ENCODE measurements at regions of chr2 and their contacts with region 1.

Region 1: GRCh38 chr2:69306822-69307578 is 80.0 kb downstream of the GFPT1 start:
- DNase-seq: peak; percentile 76 to 82
- H3K4me3 ChIP-seq: peak overlapping the region; percentile 35 to 71 (median 57)
- H3K27ac ChIP-seq: peak overlapping the region; percentile 42 to 55 (median 46)
- H3K4me1 ChIP-seq: peaks cover 15 to 38% of the 10 kb centered on the region in 2 donors
- H3K27me3 ChIP-seq: no peaks in the 10 kb centered on the region
- CTCF ChIP-seq: peak; percentile 38 to 91 (median 76)
- POLR2A ChIP-seq: no peak

Region 2: GRCh38 chr2:69012310-69013141 is 294.5 kb before region 1 on chr2:
- intact Hi-C with region 1: loop called (anchors 5 kb)
- DNase-seq: peak; percentile 65 to 75
- H3K4me3 ChIP-seq: peak overlapping the region; percentile 59 to 90 (median 82)
- H3K27ac ChIP-seq: peak overlapping the region in 2 of 3 donors; percentile 43 to 75
- H3K4me1 ChIP-seq: peaks cover 17 to 23% of the 10 kb centered on the region in 2 donors
- H3K27me3 ChIP-seq: no peaks in the 10 kb centered on the region
- CTCF ChIP-seq: peak; percentile 41 to 81 (median 68)
- POLR2A ChIP-seq: no peak

Region 3: DNA sequence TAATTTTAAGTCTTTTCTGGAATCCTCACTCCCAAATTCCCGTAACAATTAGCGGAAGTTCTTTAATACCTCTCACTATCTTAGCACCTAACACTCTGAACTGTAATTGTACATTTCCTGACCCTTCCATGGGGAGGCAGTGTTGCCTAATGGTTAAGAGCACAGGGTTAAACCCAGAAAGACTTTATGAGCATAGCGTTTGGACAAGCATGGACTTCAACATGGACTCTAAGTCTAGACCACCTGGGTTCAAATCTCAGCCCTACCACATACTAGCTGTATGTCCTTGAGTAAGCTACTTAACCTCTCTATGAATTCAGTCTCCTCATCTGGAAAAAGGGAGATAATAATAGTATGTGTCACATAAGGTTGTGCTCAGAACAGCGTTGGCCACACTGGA is 281.0 kb before region 1 on chr2:
- intact Hi-C with region 1: loop called (anchors 5 kb)
- DNase-seq: peak; percentile 32 to 43
- H3K4me3 ChIP-seq: no peak overlapping the region
- H3K27ac ChIP-seq: no peak overlapping the region
- H3K4me1 ChIP-seq: peaks cover 0 to 1% of the 10 kb centered on the region in 2 donors
- H3K27me3 ChIP-seq: no peaks in the 10 kb centered on the region
- CTCF ChIP-seq: peak in 5 of 6 experiments; percentile 32 to 83 (median 65)
- POLR2A ChIP-seq: no peak

Region 4: GRCh38 chr2:69163109-69163508 is 143.9 kb before region 1 on chr2:
- intact Hi-C with region 1: loop called (anchors 10 kb)
- DNase-seq: peak in 1 of 2 donors; percentile 30
- H3K4me3 ChIP-seq: no peak overlapping the region
- H3K27ac ChIP-seq: peak overlapping the region in 2 of 3 donors; percentile 2 to 46
- H3K4me1 ChIP-seq: peaks cover 34 to 85% of the 10 kb centered on the region in 2 donors
- H3K27me3 ChIP-seq: no peaks in the 10 kb centered on the region
- CTCF ChIP-seq: no peak
- POLR2A ChIP-seq: no peak

Region 5: GRCh38 chr2:69196327-69197117 is 110.5 kb before region 1 on chr2:
- intact Hi-C with region 1: no loop called
- DNase-seq: no peak
- H3K4me3 ChIP-seq: no peak overlapping the region
- H3K27ac ChIP-seq: no peak overlapping the region
- H3K4me1 ChIP-seq: no peaks in the 10 kb centered on the region
- H3K27me3 ChIP-seq: no peaks in the 10 kb centered on the region
- CTCF ChIP-seq: no peak
- POLR2A ChIP-seq: no peak

Region 6: GRCh38 chr2:69549421-69549820 is 242.4 kb after region 1 on chr2:
- intact Hi-C with region 1: no loop called
- DNase-seq: no peak
- H3K4me3 ChIP-seq: no peak overlapping the region
- H3K27ac ChIP-seq: peak overlapping the region in 1 of 3 donors; percentile 3
- H3K4me1 ChIP-seq: peaks cover 11 to 22% of the 10 kb centered on the region in 2 donors
- H3K27me3 ChIP-seq: no peaks in the 10 kb centered on the region
- CTCF ChIP-seq: no peak
- POLR2A ChIP-seq: no peak

Measured in thyroid gland (tissue), 4 donors.